Activated naive CD4-positive, alpha-beta T cell treated with anti-CD3 and anti-CD28 coated beads for 36 hours (primary cell): ENCODE measurements at regions of chr6 and their contacts with region 1.

Region 1: DNA sequence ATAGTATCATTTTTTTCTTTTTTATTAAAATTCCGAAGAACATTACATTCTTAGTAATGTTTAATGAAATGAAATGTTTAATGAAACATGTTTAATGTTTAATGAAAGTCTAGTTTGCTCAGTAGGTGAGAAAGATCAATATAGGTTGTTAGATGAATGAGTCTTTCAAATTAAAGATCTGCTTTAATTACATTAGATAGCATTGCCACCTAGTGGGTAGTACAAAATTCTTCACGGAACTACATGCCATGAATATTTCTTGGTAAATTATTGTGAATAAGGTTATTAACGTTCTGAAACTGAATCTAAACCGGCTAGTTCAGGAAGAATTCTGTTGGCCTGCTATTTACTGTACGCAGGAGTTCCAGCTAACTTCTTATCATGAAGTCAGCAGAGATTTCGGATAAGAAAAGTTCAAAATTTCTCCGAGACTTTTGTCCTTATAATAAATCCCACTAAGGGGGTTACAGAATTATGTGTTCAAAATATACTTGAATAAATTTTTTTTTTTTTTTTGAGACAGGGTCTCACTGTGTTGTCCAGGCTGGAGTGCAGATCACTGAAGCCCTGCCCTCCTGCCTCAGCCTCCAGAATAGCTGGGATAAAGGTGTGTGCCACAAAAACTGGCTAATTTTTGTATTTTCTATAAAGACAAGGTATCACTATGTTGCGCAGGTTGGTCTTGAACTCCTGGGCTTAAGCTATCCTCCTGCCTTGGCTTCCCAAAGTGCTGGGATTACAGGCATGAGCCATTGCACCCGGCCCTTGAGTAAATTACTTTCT is 7.9 kb upstream of the GMNN start:
- DNase-seq: no peak
- H3K4me3 Mint-ChIP-seq: no peak overlapping the region
- H3K27ac Mint-ChIP-seq: no peak overlapping the region
- H3K4me1 Mint-ChIP-seq: peaks cover 3% of the 10 kb centered on the region
- H3K27me3 Mint-ChIP-seq: no peaks in the 10 kb centered on the region

Region 2: DNA sequence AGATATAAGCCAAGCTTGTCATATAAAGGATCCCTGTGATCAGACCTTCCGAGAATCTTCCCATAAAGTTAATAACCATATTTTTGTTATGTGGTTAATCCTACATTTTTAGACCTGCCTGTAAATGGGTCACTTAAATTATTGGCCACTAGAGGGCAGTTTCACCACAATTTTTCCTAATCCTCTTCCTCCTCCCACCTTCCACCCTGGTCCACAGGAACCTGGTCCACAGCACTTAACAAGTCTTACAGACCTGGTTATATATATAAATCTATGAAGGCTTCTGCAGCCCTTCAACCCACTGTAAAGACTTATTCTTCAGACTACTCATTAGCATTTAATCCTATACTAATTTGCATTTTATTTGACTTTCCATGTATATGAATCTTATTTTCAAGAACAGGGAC is 335.8 kb before region 1 on chr6:
- CTCF ChIA-PET with region 1: interaction called, 4 read pairs
- intact Hi-C with region 1: loop called (anchors 1 kb)
- DNase-seq: peak; percentile 36
- H3K4me3 Mint-ChIP-seq: no peak overlapping the region
- H3K27ac Mint-ChIP-seq: no peak overlapping the region
- H3K4me1 Mint-ChIP-seq: no peaks in the 10 kb centered on the region
- H3K27me3 Mint-ChIP-seq: no peaks in the 10 kb centered on the region

Region 3: DNA sequence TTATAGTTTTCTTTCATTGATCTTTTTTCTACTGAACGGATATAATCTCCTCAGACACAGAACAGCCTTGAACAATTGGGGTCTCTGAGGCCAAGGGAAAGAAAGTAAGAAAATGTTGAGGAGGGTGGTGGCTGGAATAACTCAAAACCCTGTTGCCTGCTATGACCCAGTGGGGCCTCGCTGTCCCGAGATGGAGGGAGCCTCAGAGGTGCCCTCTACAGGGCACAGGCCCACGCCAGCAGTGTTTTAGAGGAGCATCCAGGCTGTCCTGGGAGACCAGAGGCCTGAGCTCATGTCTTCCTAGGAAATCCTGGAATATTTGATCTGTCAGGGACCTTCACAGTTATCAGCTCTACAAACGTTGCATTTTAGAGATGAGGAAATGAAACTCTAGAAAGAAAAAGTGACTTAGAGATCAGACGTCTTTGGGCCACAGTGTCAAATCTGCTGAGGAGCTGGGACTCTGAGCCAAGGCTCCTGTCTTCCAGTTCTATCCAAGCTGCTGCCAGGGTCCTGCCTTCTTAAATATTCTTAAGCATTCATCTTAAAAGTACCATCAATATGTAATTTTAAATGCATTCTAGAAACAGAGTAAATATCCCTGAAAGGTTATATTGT is 245.8 kb before region 1 on chr6:
- CTCF ChIA-PET with region 1: interaction called, 3 read pairs
- intact Hi-C with region 1: loop called (anchors 2 kb)
- DNase-seq: peak; percentile 62
- H3K4me3 Mint-ChIP-seq: no peak overlapping the region
- H3K27ac Mint-ChIP-seq: no peak overlapping the region
- H3K4me1 Mint-ChIP-seq: peaks cover 8% of the 10 kb centered on the region
- H3K27me3 Mint-ChIP-seq: no peaks in the 10 kb centered on the region

Region 4: GRCh38 chr6:24547243-24547642 is 219.6 kb before region 1 on chr6:
- CTCF ChIA-PET with region 1: interaction called, 5 read pairs
- intact Hi-C with region 1: loop called (anchors 1 kb)
- DNase-seq: peak; percentile 81
- H3K4me3 Mint-ChIP-seq: no peak overlapping the region
- H3K27ac Mint-ChIP-seq: no peak overlapping the region
- H3K4me1 Mint-ChIP-seq: peaks cover 8% of the 10 kb centered on the region
- H3K27me3 Mint-ChIP-seq: peaks cover 5% of the 10 kb centered on the region

Region 5: GRCh38 chr6:24689964-24690363 is 76.9 kb before region 1 on chr6:
- CTCF ChIA-PET with region 1: no interaction called
- intact Hi-C with region 1: loop called (anchors 1 kb)
- DNase-seq: no peak
- H3K4me3 Mint-ChIP-seq: no peak overlapping the region
- H3K27ac Mint-ChIP-seq: no peak overlapping the region
- H3K4me1 Mint-ChIP-seq: peaks cover 22% of the 10 kb centered on the region
- H3K27me3 Mint-ChIP-seq: no peaks in the 10 kb centered on the region

Region 6: DNA sequence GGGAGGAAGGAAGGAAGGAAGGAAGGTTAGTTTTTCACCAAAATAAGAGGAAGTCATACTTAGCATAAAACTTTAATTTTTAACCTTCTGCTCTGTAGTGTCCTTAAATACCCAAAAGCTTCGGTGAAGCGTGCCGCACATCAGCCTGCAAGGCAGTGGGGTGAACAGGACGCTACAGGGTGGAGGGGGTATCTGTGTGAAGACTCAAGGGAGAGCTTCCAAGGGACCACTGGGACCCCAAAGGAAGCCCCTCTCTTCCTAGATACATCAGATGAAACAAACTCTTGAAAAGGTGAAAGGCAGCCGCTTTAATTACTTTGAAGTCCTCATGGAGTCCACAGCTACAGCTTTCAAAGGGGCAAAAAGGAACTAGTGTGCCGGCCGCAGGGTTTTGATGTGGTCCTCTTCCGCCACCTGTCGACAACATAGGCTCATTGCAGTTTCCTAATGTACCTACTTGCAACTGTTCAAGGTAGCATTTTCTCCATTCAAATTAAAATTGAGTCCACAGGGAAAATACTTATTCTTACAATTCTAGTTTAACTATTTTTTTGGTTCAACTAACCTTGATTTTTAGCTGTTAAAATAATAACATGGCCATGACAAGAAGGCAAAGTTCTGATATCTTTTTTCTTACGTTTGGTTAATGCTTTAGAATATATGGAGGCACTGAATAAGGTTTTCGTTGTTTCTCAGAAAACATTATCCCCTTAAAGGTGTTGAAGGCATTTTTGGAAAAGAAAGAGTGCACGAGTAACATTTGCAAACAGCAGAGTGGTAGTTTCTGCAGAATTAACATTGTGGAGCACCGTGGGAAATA is 303.9 kb after region 1 on chr6:
- CTCF ChIA-PET with region 1: interaction called, 3 read pairs
- intact Hi-C with region 1: loop called (anchors 2 kb)
- DNase-seq: peak; percentile 91
- H3K4me3 Mint-ChIP-seq: peak overlapping the region; percentile 38
- H3K27ac Mint-ChIP-seq: peak overlapping the region; percentile 70
- H3K4me1 Mint-ChIP-seq: peaks cover 10% of the 10 kb centered on the region
- H3K27me3 Mint-ChIP-seq: no peaks in the 10 kb centered on the region